AG04449 (cell line): ENCODE measurements at regions of chr4 and their contacts with region 1.

Region 1: GRCh38 chr4:71184195-71184781 is 154.5 kb upstream of the SLC4A4 start:
- DNase-seq: no peak
- H3K4me3 ChIP-seq: no peak overlapping the region
- CTCF ChIP-seq: peak; percentile 61

Region 2: GRCh38 chr4:71136052-71136451 is 48.2 kb before region 1 on chr4:
- CTCF ChIA-PET with region 1: interaction called, 10 read pairs
- POLR2A ChIA-PET with region 1: no interaction called
- DNase-seq: no peak
- H3K4me3 ChIP-seq: no peak overlapping the region
- CTCF ChIP-seq: no peak

Region 3: GRCh38 chr4:71195924-71196323 is 11.6 kb after region 1 on chr4:
- CTCF ChIA-PET with region 1: interaction called, 35 read pairs
- POLR2A ChIA-PET with region 1: interaction called, 3 read pairs
- DNase-seq: peak; percentile 62
- H3K4me3 ChIP-seq: no peak overlapping the region
- CTCF ChIP-seq: no peak

Region 4: DNA sequence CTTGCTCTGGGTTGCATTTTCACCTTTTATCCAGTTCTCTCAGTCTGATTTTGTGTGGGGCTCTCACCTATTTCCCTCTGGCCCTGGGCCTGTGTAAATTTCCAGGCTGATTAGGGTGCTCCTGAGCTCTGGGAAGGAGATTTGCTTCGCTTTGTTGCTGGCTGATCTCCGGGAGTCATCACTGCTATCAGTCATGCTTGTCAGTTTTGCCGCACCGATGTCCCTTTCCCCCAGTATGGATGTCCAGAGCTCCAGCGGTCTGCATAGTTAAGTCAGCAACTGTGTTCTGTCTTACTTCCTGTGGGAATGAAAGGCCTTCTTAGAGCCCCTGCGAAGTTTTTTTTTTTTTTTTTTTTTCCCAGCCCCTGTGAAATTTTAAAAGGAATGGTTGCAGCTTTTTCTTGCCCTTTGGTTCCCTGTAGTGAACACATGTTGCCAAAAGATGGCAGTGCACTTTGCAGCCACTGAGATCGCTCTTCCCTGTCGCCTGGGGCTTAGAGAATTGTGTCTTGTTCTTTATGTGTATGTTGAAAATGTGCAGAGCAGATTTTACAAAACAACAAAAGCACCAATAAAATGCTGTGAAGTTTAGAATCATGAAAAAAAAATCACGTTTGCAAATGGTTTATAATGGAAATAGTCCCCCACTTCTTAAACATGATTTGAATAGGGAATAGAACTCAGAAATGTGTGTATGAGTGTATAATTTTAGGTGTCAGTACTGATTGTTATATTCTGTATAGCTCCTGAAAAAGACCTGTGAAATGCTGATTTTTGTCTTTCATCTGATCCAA is 45.4 kb after region 1 on chr4:
- CTCF ChIA-PET with region 1: interaction called, 39 read pairs
- POLR2A ChIA-PET with region 1: no interaction called
- DNase-seq: no peak
- H3K4me3 ChIP-seq: no peak overlapping the region; the same call in 1 of the 2 replicates
- CTCF ChIP-seq: peak; percentile 76

Region 5: GRCh38 chr4:71553605-71554004 is 369.3 kb after region 1 on chr4:
- CTCF ChIA-PET with region 1: interaction called, 27 read pairs
- POLR2A ChIA-PET with region 1: no interaction called
- DNase-seq: no peak
- H3K4me3 ChIP-seq: no peak overlapping the region
- CTCF ChIP-seq: peak; percentile 63